PC-9 (cell line): ENCODE measurements at regions of chr5 and their contacts with region 1.

Region 1: GRCh38 chr5:103258368-103258956 is at the start of gene MACIR:
- DNase-seq: peak; percentile 93 to 97
- H3K4me3 ChIP-seq: peak within 1 kb of the TSS; percentile 90
- H3K27ac ChIP-seq: peak within 1 kb of the TSS; percentile 73
- H3K4me1 ChIP-seq: peaks cover 34% of the 10 kb centered on the region
- H3K27me3 ChIP-seq: no peaks in the 10 kb centered on the region
- CTCF ChIP-seq: no peak
- total RNA-seq, gene MACIR: 21.0 and 28.4 TPM in 2 replicates

Region 2: DNA sequence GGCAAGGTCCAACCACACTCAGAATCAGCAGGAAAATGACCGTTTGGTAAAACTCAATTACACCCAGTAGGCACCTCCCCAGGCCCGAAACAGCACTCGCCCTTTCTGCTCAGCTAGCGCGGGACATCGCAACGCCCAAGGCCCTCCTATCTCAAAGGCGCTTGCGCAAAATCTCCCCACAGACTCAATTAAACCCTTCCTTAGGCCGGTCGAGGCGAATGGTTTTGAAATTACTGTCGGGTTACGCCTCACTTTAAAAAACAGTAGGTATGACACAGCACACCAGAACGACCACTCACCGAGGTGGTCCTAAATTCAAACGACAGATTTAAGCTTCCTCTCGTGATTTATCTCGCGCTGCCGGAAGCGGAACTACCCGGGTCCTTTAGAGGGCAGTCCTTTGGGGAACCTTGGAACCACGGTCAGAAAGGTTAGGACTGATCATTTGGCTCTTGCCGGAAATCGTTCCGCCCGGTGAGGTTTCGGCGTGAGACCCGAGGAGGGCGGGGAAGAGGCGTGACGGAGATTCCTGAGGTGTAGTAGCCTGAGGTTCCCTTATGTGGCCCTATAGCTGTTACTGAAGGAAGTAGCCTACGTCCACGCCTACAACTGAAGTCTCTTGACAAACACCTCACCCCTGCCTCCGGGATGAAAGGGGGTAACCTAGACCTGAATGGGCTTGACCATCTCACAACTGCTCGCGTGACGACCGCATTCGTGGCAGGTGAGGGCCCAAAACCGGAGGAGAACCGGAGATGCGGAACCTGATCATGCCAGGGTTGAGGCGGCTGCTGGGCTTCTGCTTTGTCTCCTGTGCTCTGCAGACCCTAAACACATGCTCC is 138.5 kb before region 1 on chr5 and contains the starts of genes GIN1 and PPIP5K2:
- CTCF ChIA-PET with region 1: no interaction called
- POLR2A ChIA-PET with region 1: interaction called, 17 read pairs
- intact Hi-C with region 1: loop called (anchors 1 kb)
- DNase-seq: peak; percentile 96
- H3K4me3 ChIP-seq: peak within 1 kb of the TSS; percentile 77
- H3K27ac ChIP-seq: peak within 1 kb of the TSS; percentile 96
- H3K4me1 ChIP-seq: peaks cover 27% of the 10 kb centered on the region
- H3K27me3 ChIP-seq: no peaks in the 10 kb centered on the region
- CTCF ChIP-seq: no peak
- total RNA-seq, gene GIN1: 5.2 and 7.9 TPM in 2 replicates
- total RNA-seq, gene PPIP5K2: 30.5 and 35.5 TPM in 2 replicates

Region 3: GRCh38 chr5:103305829-103306228 is 47.4 kb after region 1 on chr5:
- CTCF ChIA-PET with region 1: no interaction called
- POLR2A ChIA-PET with region 1: interaction called, 15 read pairs
- intact Hi-C with region 1: no loop called
- DNase-seq: peak in 1 of 2 experiments; percentile 46
- H3K4me3 ChIP-seq: no peak overlapping the region
- H3K27ac ChIP-seq: no peak overlapping the region
- H3K4me1 ChIP-seq: 0 out of 2 replicates have a peak, but pooled peaks cover 6% of the 10 kb centered on the region
- H3K27me3 ChIP-seq: no peaks in the 10 kb centered on the region
- CTCF ChIP-seq: no peak

Region 4: GRCh38 chr5:103461243-103461642 is 202.8 kb after region 1 on chr5:
- CTCF ChIA-PET with region 1: interaction called, 16 read pairs
- POLR2A ChIA-PET with region 1: interaction called, 11 read pairs
- intact Hi-C with region 1: no loop called
- DNase-seq: peak; percentile 22 to 65
- H3K4me3 ChIP-seq: no peak overlapping the region
- H3K27ac ChIP-seq: 0 out of 2 replicates have a peak overlapping the region, but pooled peaks have one; percentile 27
- H3K4me1 ChIP-seq: peaks cover 16% of the 10 kb centered on the region
- H3K27me3 ChIP-seq: no peaks in the 10 kb centered on the region
- CTCF ChIP-seq: no peak